T-cell (primary cell): ENCODE measurements at regions of chr7 and their contacts with region 1.

Region 1: GRCh38 chr7:101534015-101534803 is 94.9 kb downstream of the MYL10 start:
- DNase-seq: no peak
- ATAC-seq: peak in 1 of 4 experiments; percentile 12
- H3K4me3 ChIP-seq: no peak overlapping the region
- H3K4me3 Mint-ChIP-seq: no peak overlapping the region
- H3K27ac ChIP-seq: no peak overlapping the region
- H3K27ac Mint-ChIP-seq: no peak overlapping the region
- H3K4me1 ChIP-seq: no peaks in the 10 kb centered on the region
- H3K4me1 Mint-ChIP-seq: peaks cover 0 to 5% (median 0%) of the 10 kb centered on the region in 3 donors
- H3K27me3 ChIP-seq: peaks cover 0 to 37% of the 10 kb centered on the region in 2 experiments
- H3K27me3 Mint-ChIP-seq: peaks cover 9 to 10% of the 10 kb centered on the region in 2 donors

Region 2: DNA sequence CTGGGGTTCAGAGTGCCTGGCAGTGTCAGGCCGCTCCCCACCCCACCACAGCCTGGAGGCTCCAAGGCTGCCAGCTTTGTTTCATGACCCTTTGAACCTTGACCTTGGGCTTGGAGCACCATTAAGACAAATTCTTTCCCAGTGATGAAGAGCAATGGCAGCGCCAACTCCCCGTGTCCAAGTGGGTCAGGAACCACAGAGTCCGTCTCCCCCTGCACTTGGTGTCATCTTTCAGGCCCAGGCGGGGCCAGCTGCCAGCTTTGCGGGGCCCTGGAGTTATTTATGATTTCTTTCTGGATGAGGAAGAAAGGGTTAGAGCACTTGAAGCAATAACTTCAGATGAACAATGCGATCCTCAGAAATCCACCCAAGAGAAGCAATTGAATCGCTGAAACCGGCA is 15.9 kb before region 1 on chr7:
- CTCF ChIA-PET with region 1: no interaction called
- POLR2A ChIA-PET with region 1: no interaction called
- DNase-seq: no peak
- ATAC-seq: no peak
- H3K4me3 ChIP-seq: no peak overlapping the region
- H3K4me3 Mint-ChIP-seq: no peak overlapping the region
- H3K27ac ChIP-seq: no peak overlapping the region
- H3K27ac Mint-ChIP-seq: no peak overlapping the region
- H3K4me1 ChIP-seq: no peaks in the 10 kb centered on the region
- H3K4me1 Mint-ChIP-seq: no peaks in the 10 kb centered on the region
- H3K27me3 ChIP-seq: peaks cover 0 to 15% of the 10 kb centered on the region in 2 experiments
- H3K27me3 Mint-ChIP-seq: peaks cover 5 to 14% of the 10 kb centered on the region in 2 donors

Region 3: DNA sequence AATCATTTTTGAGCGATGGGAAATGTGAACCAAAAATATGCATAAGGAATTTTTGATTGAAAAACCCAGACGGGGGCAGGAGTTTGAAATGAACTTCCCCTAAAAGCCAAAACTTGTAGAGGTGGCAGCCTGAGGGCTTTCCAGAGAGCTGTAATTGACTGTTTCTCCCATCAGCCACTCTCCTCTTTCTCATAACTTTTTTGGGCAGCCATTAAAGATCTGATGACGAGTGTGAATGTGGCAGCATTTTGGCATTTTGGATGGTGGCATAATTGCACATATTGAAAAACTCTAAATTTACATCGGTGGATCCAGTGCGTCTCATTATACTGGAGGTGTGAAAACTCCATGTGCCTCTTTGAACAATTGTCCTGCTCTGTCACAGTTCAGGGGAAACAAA is 442.2 kb after region 1 on chr7:
- CTCF ChIA-PET with region 1: interaction called in 1 of 2 experiments, 11 read pairs
- POLR2A ChIA-PET with region 1: no interaction called
- DNase-seq: no peak
- ATAC-seq: no peak
- H3K4me3 ChIP-seq: no peak overlapping the region
- H3K4me3 Mint-ChIP-seq: no peak overlapping the region
- H3K27ac ChIP-seq: no peak overlapping the region
- H3K27ac Mint-ChIP-seq: no peak overlapping the region
- H3K4me1 ChIP-seq: no peaks in the 10 kb centered on the region
- H3K4me1 Mint-ChIP-seq: peaks cover 2 to 11% (median 4%) of the 10 kb centered on the region in 3 donors
- H3K27me3 ChIP-seq: no peaks in the 10 kb centered on the region
- H3K27me3 Mint-ChIP-seq: no peaks in the 10 kb centered on the region